Activated T-helper 1 cell treated with anti-CD3 and anti-CD28 coated beads, Interleukin-12 subunit alpha, Interleukin-12 subunit beta, Interleukin-2, Interleukin-4 antibody, amounts not matched to agents 30 ng/mL and 10 ng/mL and 1 ng/mL, durations not matched to agents 14 hours and 24 hours and 36 hours (primary cell): ENCODE measurements at regions of chr7 and their contacts with region 1.

Region 1: DNA sequence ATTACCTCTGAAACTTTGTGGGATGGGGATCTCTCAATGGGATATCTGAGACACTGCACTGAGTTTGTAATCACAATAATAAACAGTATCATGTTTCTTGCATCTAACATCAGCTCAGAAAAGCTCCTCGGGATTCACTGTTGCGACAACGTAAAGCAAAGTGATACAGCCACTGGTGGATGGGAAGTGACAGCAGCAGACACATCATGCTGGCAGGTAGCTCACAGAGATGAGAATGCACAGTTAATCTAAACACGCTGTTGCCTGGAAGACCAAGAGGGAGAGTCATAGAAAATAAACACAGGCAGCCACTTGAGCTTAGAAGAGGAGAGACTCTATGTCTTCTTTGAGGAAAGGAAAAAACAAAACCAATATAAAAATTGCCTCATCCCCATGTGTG is 513.8 kb downstream of the MAGI2 start:
- DNase-seq: no peak
- H3K4me3 Mint-ChIP-seq: no peak overlapping the region
- H3K27ac Mint-ChIP-seq: no peak overlapping the region
- H3K4me1 Mint-ChIP-seq: no peaks in the 10 kb centered on the region
- H3K27me3 Mint-ChIP-seq: no peaks in the 10 kb centered on the region

Region 2: DNA sequence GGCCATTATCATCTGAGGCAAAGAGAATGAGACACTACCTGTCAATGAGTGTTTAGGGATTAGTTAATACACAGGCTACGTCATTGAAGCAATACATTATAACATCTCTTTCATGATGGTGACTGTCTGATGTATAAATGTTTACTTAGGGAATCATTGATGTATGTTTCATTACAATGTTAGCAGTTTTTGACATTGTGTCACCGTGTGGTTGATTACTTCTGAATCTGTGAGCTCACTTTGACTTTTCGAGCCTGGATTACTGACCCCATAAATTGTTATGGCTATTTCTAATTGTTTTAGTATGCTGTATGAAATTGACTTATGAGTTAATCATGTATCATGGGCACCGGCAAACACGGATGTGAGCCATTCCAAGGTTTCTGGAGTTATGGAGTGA is 19.8 kb after region 1 on chr7:
- intact Hi-C with region 1: loop called (anchors 1 kb)
- DNase-seq: no peak
- H3K4me3 Mint-ChIP-seq: no peak overlapping the region
- H3K27ac Mint-ChIP-seq: no peak overlapping the region
- H3K4me1 Mint-ChIP-seq: no peaks in the 10 kb centered on the region
- H3K27me3 Mint-ChIP-seq: no peaks in the 10 kb centered on the region

Region 3: GRCh38 chr7:80478683-80479082 is 1539.0 kb after region 1 on chr7:
- intact Hi-C with region 1: no loop called
- DNase-seq: no peak
- H3K4me3 Mint-ChIP-seq: no peak overlapping the region
- H3K27ac Mint-ChIP-seq: no peak overlapping the region
- H3K4me1 Mint-ChIP-seq: no peaks in the 10 kb centered on the region
- H3K27me3 Mint-ChIP-seq: no peaks in the 10 kb centered on the region